ENCODE measurements at regions of chr10 and their contacts with region 1.

Region 1: GRCh38 chr10:48363617-48364355 is 57.3 kb downstream of the MAPK8 start:
- DNase-seq: peak in 2 of 10 donors; percentile 17 to 61
- H3K4me3 ChIP-seq: no peak overlapping the region
- H3K27ac ChIP-seq: no peak overlapping the region
- H3K27me3 ChIP-seq: no peaks in the 10 kb centered on the region
- CTCF ChIP-seq: peak; percentile 32 to 94 (median 76)

Region 2: GRCh38 chr10:48506147-48506917 is 142.5 kb after region 1 on chr10:
- intact Hi-C with region 1: loop called (anchors 5 kb)
- DNase-seq: no peak
- H3K4me3 ChIP-seq: no peak overlapping the region
- H3K27ac ChIP-seq: no peak overlapping the region
- H3K27me3 ChIP-seq: no peaks in the 10 kb centered on the region
- CTCF ChIP-seq: peak in 48 of 56 donors; percentile 22 to 64 (median 40)

Region 3: DNA sequence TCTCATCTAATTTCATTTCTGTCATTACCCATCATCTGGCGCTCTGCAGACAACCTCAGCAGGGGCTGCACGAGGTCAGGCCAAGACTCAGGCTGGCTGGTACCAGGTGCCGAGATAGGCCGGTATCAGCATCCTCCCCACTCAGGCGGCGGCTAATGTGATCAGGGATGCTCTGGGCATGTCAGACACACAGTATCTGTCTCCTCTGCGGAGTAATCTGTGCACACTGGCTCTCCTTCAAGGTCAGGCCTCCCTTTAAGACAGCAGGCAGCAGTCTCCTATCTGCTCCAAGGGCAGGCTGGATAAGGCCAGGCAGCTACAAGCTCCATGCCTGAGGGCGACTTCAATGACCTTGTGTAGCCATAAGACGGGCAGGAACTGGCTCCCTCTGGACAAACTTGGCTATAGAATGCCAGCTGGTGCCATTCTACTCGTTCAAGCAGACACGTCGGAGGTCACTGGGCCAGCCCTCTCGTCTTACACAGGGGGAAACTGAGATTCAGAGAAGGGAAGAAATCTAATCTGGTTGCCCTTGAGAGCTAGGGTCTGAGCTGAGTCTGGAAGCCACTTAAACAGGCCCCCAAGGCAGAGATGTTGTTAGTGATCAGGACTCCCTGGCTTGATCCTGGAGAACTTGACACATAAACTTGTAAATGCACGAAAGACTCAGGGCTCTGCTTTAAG is 181.8 kb after region 1 on chr10:
- intact Hi-C with region 1: loop called in 1 of 2 experiments (anchors 5 kb)
- DNase-seq: peak in 2 of 10 donors; percentile 5 to 24
- H3K4me3 ChIP-seq: no peak overlapping the region
- H3K27ac ChIP-seq: no peak overlapping the region
- H3K27me3 ChIP-seq: no peaks in the 10 kb centered on the region
- CTCF ChIP-seq: no peak